PC-3 (cell line): ENCODE measurements at regions of chr9 and their contacts with region 1.

Region 1: DNA sequence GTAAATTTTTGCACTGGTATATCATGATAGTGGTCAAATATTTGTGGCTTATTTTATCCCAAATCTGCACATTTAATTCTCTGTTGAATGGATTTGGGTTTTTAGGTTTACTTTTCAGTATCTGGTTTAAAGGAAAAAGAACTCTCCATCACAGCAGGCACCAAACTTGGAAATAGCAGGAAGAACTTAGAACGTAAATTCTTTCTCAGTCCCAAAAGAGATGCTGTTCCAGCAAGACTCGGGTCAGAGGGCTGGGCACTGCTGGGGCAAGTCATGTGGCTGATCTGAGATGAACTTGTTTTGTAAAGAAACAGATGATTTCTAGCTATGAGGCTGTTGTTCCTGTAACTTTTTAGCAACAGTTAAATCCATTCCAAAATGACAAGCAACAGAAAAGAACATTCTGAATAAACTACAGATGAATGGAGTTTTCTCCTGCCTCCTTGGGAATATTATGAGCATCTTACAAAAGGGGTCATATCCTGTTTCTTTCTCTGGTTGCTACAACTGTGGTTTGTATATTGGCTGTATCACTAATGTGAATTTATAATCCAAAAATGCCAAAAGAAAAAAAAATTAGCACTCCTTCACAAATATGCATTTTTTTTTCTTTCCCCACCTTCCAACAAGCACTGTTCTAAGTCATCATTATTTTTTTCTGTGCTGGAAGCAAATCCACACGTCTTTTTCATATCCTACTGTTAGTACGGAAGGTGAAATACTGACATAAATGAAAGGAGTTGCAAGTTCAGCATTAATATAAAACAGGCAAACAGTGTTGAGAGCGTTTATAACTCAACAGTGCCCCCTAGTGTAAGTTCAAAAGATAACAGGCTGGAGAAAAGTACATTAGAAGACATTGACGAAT is 31.1 kb downstream of the OR2K2 start:
- DNase-seq: peak; percentile 73
- ATAC-seq: peak; percentile 80
- H3K4me3 ChIP-seq: peak overlapping the region; percentile 25; the same call in 1 of the 2 replicates
- H3K27ac ChIP-seq: peak overlapping the region; percentile 75
- H3K4me1 ChIP-seq: peaks cover 19% of the 10 kb centered on the region
- H3K27me3 ChIP-seq: no peaks in the 10 kb centered on the region
- CTCF ChIP-seq: peak; percentile 78

Region 2: GRCh38 chr9:110452227-110452801 is 846.7 kb before region 1 on chr9:
- CTCF ChIA-PET with region 1: no interaction called
- POLR2A ChIA-PET with region 1: no interaction called
- intact Hi-C with region 1: loop called (anchors 5 kb)
- DNase-seq: peak; percentile 50
- ATAC-seq: peak; percentile 54
- H3K4me3 ChIP-seq: no peak overlapping the region
- H3K27ac ChIP-seq: no peak overlapping the region
- H3K4me1 ChIP-seq: no peaks in the 10 kb centered on the region
- H3K27me3 ChIP-seq: no peaks in the 10 kb centered on the region
- CTCF ChIP-seq: peak; percentile 59

Region 3: DNA sequence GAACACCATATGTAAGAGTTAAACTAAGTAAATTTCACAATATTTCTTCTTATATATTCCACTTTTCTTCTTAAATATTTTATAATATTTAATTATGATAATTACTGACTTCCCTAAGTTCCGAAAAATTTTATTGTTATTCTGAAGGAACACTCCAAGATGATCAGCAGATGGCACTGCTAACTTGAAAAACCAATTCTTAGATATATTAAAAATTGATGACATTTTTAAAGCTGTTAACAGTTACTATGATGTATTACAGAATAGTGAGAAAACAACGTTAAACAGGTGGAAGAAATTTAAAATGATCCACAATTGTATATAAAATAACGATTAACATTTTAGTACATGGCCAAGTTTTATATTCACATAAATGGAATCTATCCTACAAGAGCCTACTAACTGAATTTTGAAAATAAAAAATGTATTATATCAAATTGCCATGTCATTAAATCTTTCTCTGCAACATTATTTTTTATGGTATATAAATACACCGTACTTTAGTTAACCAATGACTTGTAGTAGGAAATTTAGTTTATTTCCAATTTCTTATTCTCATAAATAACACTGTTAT is 660.5 kb before region 1 on chr9:
- CTCF ChIA-PET with region 1: no interaction called
- POLR2A ChIA-PET with region 1: no interaction called
- intact Hi-C with region 1: loop called (anchors 1 kb)
- DNase-seq: peak; percentile 64
- ATAC-seq: no peak
- H3K4me3 ChIP-seq: 0 out of 2 replicates have a peak overlapping the region, but pooled peaks have one; percentile 19
- H3K27ac ChIP-seq: peak overlapping the region; percentile 96
- H3K4me1 ChIP-seq: peaks cover 39% of the 10 kb centered on the region
- H3K27me3 ChIP-seq: no peaks in the 10 kb centered on the region
- CTCF ChIP-seq: peak; percentile 59

Region 4: DNA sequence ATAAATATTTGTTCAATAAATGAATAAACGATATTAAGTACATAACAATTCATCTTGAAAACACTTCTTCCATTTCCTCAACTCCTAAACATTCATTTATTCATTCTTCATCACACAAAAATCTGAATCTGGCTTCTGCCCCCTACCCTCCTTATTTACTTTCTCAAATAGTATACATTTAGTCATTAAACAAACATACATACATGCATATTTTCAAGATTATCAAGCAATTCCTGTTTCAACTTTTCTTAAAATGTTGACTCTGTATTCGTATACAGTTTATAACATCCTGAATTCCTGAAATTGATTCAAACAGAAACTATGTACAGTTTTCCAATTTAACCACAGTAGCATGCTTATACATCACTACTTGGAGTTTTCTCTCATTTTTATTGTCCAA is 501.4 kb before region 1 on chr9:
- CTCF ChIA-PET with region 1: no interaction called
- POLR2A ChIA-PET with region 1: no interaction called
- intact Hi-C with region 1: loop called (anchors 5 kb)
- DNase-seq: peak; percentile 91
- ATAC-seq: peak; percentile 67
- H3K4me3 ChIP-seq: no peak overlapping the region; the same call in 1 of the 2 replicates
- H3K27ac ChIP-seq: peak overlapping the region; percentile 99
- H3K4me1 ChIP-seq: peaks cover 43% of the 10 kb centered on the region
- H3K27me3 ChIP-seq: no peaks in the 10 kb centered on the region
- CTCF ChIP-seq: no peak

Region 5: GRCh38 chr9:111023128-111023527 is 275.8 kb before region 1 on chr9:
- CTCF ChIA-PET with region 1: no interaction called
- POLR2A ChIA-PET with region 1: no interaction called
- intact Hi-C with region 1: loop called (anchors 5 kb)
- DNase-seq: no peak
- ATAC-seq: no peak
- H3K4me3 ChIP-seq: no peak overlapping the region
- H3K27ac ChIP-seq: peak overlapping the region; percentile 33
- H3K4me1 ChIP-seq: peaks cover 62% of the 10 kb centered on the region
- H3K27me3 ChIP-seq: no peaks in the 10 kb centered on the region
- CTCF ChIP-seq: no peak

Region 6: DNA sequence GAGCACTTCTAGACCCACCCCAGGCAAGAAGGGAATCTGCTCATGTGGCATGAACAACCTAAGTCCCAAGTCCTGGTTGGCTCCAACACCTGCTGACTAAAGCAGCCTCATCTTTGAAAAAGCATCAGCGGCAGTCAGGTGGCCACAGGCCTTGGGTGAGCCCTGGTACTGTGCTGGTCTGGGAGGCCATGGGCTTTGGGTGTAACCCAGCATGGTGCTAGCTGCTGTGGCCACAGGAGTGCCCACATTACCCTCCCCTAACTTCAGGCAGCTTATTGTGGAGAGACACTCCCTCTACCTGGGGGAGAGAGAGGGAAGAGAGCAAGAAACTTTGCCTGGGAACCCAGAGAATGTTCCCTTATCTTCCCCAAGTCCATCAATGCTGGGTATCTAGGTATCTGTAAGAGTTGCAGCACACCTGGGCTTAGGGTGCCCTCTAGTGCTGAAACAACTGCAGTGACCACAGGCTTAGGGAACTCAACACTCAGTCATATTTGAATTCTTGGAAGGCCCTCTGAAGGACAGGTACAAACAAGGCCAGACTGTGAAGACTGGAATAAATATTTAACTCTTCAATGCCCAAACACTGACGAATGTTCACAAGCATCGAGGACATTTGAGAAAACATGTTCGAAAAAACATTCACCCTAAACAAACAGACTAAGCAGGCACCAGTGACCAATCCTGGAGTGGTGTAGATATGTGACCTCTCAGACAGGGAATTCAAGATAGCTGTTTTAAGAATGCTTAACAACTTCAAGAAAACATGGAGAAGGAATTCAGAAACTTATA is 101.0 kb after region 1 on chr9:
- CTCF ChIA-PET with region 1: no interaction called
- POLR2A ChIA-PET with region 1: no interaction called
- intact Hi-C with region 1: loop called (anchors 1 kb)
- DNase-seq: peak; percentile 69
- ATAC-seq: peak; percentile 85
- H3K4me3 ChIP-seq: no peak overlapping the region
- H3K27ac ChIP-seq: no peak overlapping the region
- H3K4me1 ChIP-seq: no peaks in the 10 kb centered on the region
- H3K27me3 ChIP-seq: no peaks in the 10 kb centered on the region
- CTCF ChIP-seq: peak; percentile 80